Caco-2 (cell line): ENCODE measurements at regions of chr14 and their contacts with region 1.

Region 1: GRCh38 chr14:62691613-62692487 is 353.4 kb downstream of the KCNH5 start:
- DNase-seq: peak; percentile 82 to 84
- H3K4me3 ChIP-seq: no peak overlapping the region
- H3K4me3 Mint-ChIP-seq: peak overlapping the region; percentile 47
- H3K27ac Mint-ChIP-seq: peak overlapping the region; percentile 94
- H3K4me1 ChIP-seq: peaks cover 69% of the 10 kb centered on the region
- H3K4me1 Mint-ChIP-seq: peaks cover 40% of the 10 kb centered on the region
- H3K27me3 ChIP-seq: no peaks in the 10 kb centered on the region
- H3K27me3 Mint-ChIP-seq: no peaks in the 10 kb centered on the region
- CTCF ChIP-seq: no peak

Region 2: GRCh38 chr14:62420847-62421246 is 271.0 kb before region 1 on chr14:
- CTCF ChIA-PET with region 1: no interaction called
- POLR2A ChIA-PET with region 1: no interaction called
- intact Hi-C with region 1: loop called (anchors 1 kb)
- DNase-seq: peak; percentile 39 to 41
- H3K4me3 ChIP-seq: no peak overlapping the region
- H3K4me3 Mint-ChIP-seq: peak overlapping the region; percentile 39
- H3K27ac Mint-ChIP-seq: peak overlapping the region; percentile 86
- H3K4me1 ChIP-seq: peaks cover 25% of the 10 kb centered on the region
- H3K4me1 Mint-ChIP-seq: peaks cover 13% of the 10 kb centered on the region
- H3K27me3 ChIP-seq: no peaks in the 10 kb centered on the region
- H3K27me3 Mint-ChIP-seq: no peaks in the 10 kb centered on the region
- CTCF ChIP-seq: no peak

Region 3: DNA sequence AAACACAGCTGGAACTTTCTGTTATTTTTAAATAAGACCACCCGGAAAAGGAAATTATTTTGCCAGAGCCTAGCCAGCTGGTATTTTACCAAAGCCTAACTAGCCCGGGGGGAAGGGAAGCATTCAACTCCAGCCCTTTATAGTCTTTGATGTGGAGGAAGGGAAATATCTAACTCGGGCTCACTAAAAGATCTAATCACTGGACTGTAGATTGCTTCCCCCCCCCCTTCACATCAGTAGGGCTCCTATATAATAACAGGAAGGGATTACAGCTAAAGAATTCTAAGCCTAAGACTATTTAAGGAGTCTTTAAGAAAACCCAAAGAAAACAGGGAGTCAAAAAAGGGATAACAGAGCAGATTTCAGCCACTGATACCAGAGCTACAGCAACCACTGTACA is 77.7 kb before region 1 on chr14:
- CTCF ChIA-PET with region 1: no interaction called
- POLR2A ChIA-PET with region 1: no interaction called
- intact Hi-C with region 1: no loop called
- DNase-seq: peak in 1 of 2 experiments; percentile 9
- H3K4me3 ChIP-seq: no peak overlapping the region
- H3K4me3 Mint-ChIP-seq: no peak overlapping the region
- H3K27ac Mint-ChIP-seq: no peak overlapping the region
- H3K4me1 ChIP-seq: peaks cover 11% of the 10 kb centered on the region; the same call in 1 of the 2 replicates
- H3K4me1 Mint-ChIP-seq: peaks cover 11% of the 10 kb centered on the region
- H3K27me3 ChIP-seq: no peaks in the 10 kb centered on the region
- H3K27me3 Mint-ChIP-seq: no peaks in the 10 kb centered on the region
- CTCF ChIP-seq: no peak

Region 4: GRCh38 chr14:62667421-62667921 is 24.4 kb before region 1 on chr14:
- CTCF ChIA-PET with region 1: no interaction called
- POLR2A ChIA-PET with region 1: no interaction called
- intact Hi-C with region 1: loop called (anchors 1 kb)
- DNase-seq: no peak
- H3K4me3 ChIP-seq: no peak overlapping the region
- H3K4me3 Mint-ChIP-seq: no peak overlapping the region
- H3K27ac Mint-ChIP-seq: no peak overlapping the region
- H3K4me1 ChIP-seq: peaks cover 20% of the 10 kb centered on the region
- H3K4me1 Mint-ChIP-seq: peaks cover 24% of the 10 kb centered on the region
- H3K27me3 ChIP-seq: no peaks in the 10 kb centered on the region
- H3K27me3 Mint-ChIP-seq: no peaks in the 10 kb centered on the region
- CTCF ChIP-seq: no peak

Region 5: GRCh38 chr14:62736426-62737043 is 44.7 kb after region 1 on chr14:
- CTCF ChIA-PET with region 1: no interaction called
- POLR2A ChIA-PET with region 1: no interaction called
- intact Hi-C with region 1: loop called (anchors 1 kb)
- DNase-seq: peak; percentile 82 to 91
- H3K4me3 ChIP-seq: no peak overlapping the region
- H3K4me3 Mint-ChIP-seq: peak overlapping the region; percentile 1
- H3K27ac Mint-ChIP-seq: peak overlapping the region; percentile 48
- H3K4me1 ChIP-seq: peaks cover 19% of the 10 kb centered on the region
- H3K4me1 Mint-ChIP-seq: peaks cover 26% of the 10 kb centered on the region
- H3K27me3 ChIP-seq: no peaks in the 10 kb centered on the region
- H3K27me3 Mint-ChIP-seq: no peaks in the 10 kb centered on the region
- CTCF ChIP-seq: no peak

Region 6: GRCh38 chr14:63039800-63040380 is 348.0 kb after region 1 on chr14:
- CTCF ChIA-PET with region 1: no interaction called
- POLR2A ChIA-PET with region 1: no interaction called
- intact Hi-C with region 1: loop called (anchors 10 kb)
- DNase-seq: peak in 1 of 2 experiments; percentile 35
- H3K4me3 ChIP-seq: no peak overlapping the region
- H3K4me3 Mint-ChIP-seq: no peak overlapping the region
- H3K27ac Mint-ChIP-seq: no peak overlapping the region
- H3K4me1 ChIP-seq: no peaks in the 10 kb centered on the region
- H3K4me1 Mint-ChIP-seq: peaks cover 6% of the 10 kb centered on the region
- H3K27me3 ChIP-seq: no peaks in the 10 kb centered on the region
- H3K27me3 Mint-ChIP-seq: no peaks in the 10 kb centered on the region
- CTCF ChIP-seq: peak; percentile 42 to 53